B cell (primary cell): ENCODE measurements at regions of chr2 and their contacts with region 1.

Region 1: GRCh38 chr2:68157402-68158133 is at the start of gene PNO1:
- DNase-seq: peak; percentile 98
- ATAC-seq: peak; percentile 95
- H3K4me3 ChIP-seq: peak within 1 kb of the TSS; percentile 80 to 93 (median 89)
- H3K4me3 Mint-ChIP-seq: peak within 1 kb of the TSS; percentile 97
- H3K27ac ChIP-seq: peak within 1 kb of the TSS; percentile 96 to 98
- H3K27ac Mint-ChIP-seq: peak within 1 kb of the TSS; percentile 100
- H3K4me1 ChIP-seq: peaks cover 32 to 35% of the 10 kb centered on the region in 2 donors
- H3K4me1 Mint-ChIP-seq: peaks cover 48% of the 10 kb centered on the region
- H3K27me3 ChIP-seq: no peaks in the 10 kb centered on the region
- H3K27me3 Mint-ChIP-seq: no peaks in the 10 kb centered on the region
- CTCF ChIP-seq: no peak
- total RNA-seq, gene PNO1: 10.8 and 12.3 TPM in 2 replicates

Region 2: DNA sequence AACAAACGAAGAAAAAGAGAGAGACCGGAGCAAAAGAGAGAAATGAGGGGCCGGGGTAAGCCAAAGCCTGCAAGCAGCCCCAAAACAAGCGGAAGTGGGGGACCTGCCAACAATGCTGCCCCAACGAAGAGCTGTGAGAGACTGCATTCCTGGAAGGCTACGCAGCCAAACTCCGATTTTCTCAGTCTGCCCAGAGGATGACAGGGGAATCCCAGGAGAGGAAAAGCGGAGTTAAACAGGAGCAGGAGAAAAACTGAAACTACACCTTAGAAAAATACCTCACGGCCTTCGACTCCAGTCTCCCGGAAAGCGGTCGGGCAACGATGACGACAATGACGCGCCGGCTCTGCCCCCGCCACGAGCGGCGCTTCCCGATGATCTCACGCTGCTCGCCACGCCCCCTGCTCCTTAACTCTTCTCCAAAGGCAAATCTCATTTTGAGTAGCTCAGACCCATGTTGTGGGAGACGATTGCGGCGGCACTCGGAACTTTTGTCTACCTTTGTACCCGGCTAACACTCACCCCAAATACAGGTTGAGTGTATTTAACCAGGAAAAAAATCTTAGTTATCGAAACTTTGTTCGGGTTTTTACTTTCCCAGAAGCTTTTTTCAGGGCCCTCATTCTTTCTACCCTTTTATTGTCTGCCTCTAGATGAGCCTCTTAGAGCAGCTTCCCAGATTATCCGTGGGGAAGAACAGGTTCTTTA is 94.7 kb before region 1 on chr2 and contains the start of gene C1D:
- CTCF ChIA-PET with region 1: no interaction called
- POLR2A ChIA-PET with region 1: no interaction called
- intact Hi-C with region 1: loop called (anchors 1 kb)
- DNase-seq: peak; percentile 95
- ATAC-seq: peak; percentile 96
- H3K4me3 ChIP-seq: peak within 1 kb of the TSS; percentile 87 to 97 (median 96)
- H3K4me3 Mint-ChIP-seq: peak within 1 kb of the TSS; percentile 95
- H3K27ac ChIP-seq: peak within 1 kb of the TSS; percentile 88 to 96
- H3K27ac Mint-ChIP-seq: peak within 1 kb of the TSS; percentile 96
- H3K4me1 ChIP-seq: peaks cover 20 to 30% of the 10 kb centered on the region in 2 donors
- H3K4me1 Mint-ChIP-seq: peaks cover 40% of the 10 kb centered on the region
- H3K27me3 ChIP-seq: no peaks in the 10 kb centered on the region
- H3K27me3 Mint-ChIP-seq: peaks cover 6% of the 10 kb centered on the region
- CTCF ChIP-seq: no peak
- total RNA-seq, gene C1D: 20.1 and 24.8 TPM in 2 replicates

Region 3: DNA sequence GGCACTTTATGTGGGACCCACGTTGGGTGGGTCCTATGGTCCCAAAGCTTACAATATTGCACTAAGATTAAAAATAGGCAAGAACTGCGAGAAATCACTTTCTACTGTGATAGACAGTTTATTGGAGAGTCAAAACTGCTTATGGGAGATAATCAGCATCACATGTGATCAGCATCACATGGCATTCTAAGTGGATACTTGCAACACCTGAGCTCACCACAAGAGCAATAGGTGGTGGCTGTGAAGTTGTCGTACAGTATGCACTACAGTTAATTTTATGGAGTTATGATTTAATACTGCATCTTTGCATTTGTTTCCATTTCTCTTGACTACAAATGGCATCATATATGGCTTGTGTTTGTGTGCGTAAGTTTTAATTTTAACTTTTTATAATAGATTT is 11.7 kb after region 1 on chr2:
- CTCF ChIA-PET with region 1: interaction called, 13 read pairs
- POLR2A ChIA-PET with region 1: interaction called, 3 read pairs
- intact Hi-C with region 1: no loop called
- DNase-seq: no peak
- ATAC-seq: no peak
- H3K4me3 ChIP-seq: no peak overlapping the region
- H3K4me3 Mint-ChIP-seq: no peak overlapping the region
- H3K27ac ChIP-seq: no peak overlapping the region
- H3K27ac Mint-ChIP-seq: no peak overlapping the region
- H3K4me1 ChIP-seq: peaks cover 12 to 14% of the 10 kb centered on the region in 2 donors
- H3K4me1 Mint-ChIP-seq: peaks cover 20% of the 10 kb centered on the region
- H3K27me3 ChIP-seq: no peaks in the 10 kb centered on the region
- H3K27me3 Mint-ChIP-seq: no peaks in the 10 kb centered on the region
- CTCF ChIP-seq: no peak

Region 4: GRCh38 chr2:68203587-68203986 is 46.0 kb after region 1 on chr2:
- CTCF ChIA-PET with region 1: no interaction called
- POLR2A ChIA-PET with region 1: no interaction called
- intact Hi-C with region 1: loop called (anchors 5 kb)
- DNase-seq: peak; percentile 48
- ATAC-seq: peak; percentile 68
- H3K4me3 ChIP-seq: peak overlapping the region in 3 of 5 experiments; percentile 12 to 58 (median 32)
- H3K4me3 Mint-ChIP-seq: peak overlapping the region; percentile 87
- H3K27ac ChIP-seq: peak overlapping the region; percentile 48 to 78
- H3K27ac Mint-ChIP-seq: peak overlapping the region; percentile 74
- H3K4me1 ChIP-seq: peaks cover 8 to 40% of the 10 kb centered on the region in 2 donors
- H3K4me1 Mint-ChIP-seq: peaks cover 63% of the 10 kb centered on the region
- H3K27me3 ChIP-seq: no peaks in the 10 kb centered on the region
- H3K27me3 Mint-ChIP-seq: no peaks in the 10 kb centered on the region
- CTCF ChIP-seq: no peak

Region 5: DNA sequence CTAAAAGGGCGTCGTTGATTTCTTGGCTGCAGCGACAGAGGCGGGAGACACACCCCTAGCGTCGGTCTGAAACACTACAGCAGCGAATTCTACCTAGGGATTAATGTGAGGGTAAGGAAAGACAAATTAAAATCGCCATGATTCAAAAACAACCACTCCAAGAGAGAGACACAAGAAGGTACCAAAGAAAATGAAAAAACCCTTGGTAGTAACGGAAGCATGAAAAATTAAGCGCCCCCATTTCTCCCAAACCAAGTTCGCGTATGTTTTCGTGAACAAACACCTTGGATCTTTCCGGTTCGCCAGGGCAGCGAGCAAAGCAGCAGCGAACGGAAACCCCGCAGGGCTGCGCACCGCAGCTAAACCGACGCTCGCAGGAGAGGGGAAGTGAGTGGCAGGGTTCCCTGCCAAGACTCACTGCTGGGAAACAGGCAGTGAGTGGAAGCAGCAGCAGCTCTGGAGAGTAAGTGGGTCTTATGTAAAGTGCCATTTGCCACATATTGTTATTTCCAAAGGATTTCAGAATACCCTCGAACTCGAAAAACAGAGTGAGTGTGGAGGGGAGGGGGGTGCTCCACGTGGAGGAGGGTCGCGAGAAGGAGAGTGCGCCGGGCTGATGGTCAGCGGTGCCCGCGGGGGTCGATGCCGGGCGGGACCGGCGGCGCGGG is 93.8 kb after region 1 on chr2:
- CTCF ChIA-PET with region 1: interaction called, 9 read pairs
- POLR2A ChIA-PET with region 1: interaction called, 14 read pairs
- intact Hi-C with region 1: loop called (anchors 1 kb)
- DNase-seq: peak; percentile 92
- ATAC-seq: peak; percentile 60
- H3K4me3 ChIP-seq: peak overlapping the region; percentile 76 to 97 (median 96)
- H3K4me3 Mint-ChIP-seq: peak overlapping the region; percentile 90
- H3K27ac ChIP-seq: peak overlapping the region; percentile 86 to 92
- H3K27ac Mint-ChIP-seq: peak overlapping the region; percentile 93
- H3K4me1 ChIP-seq: peaks cover 39 to 55% of the 10 kb centered on the region in 2 donors
- H3K4me1 Mint-ChIP-seq: peaks cover 36% of the 10 kb centered on the region
- H3K27me3 ChIP-seq: no peaks in the 10 kb centered on the region
- H3K27me3 Mint-ChIP-seq: no peaks in the 10 kb centered on the region
- CTCF ChIP-seq: peak; percentile 77

Region 6: GRCh38 chr2:68387408-68388350 is 230.1 kb after region 1 on chr2:
- CTCF ChIA-PET with region 1: no interaction called
- POLR2A ChIA-PET with region 1: no interaction called
- intact Hi-C with region 1: no loop called
- DNase-seq: peak; percentile 90
- ATAC-seq: peak; percentile 69
- H3K4me3 ChIP-seq: peak overlapping the region in 2 of 5 experiments; percentile 10 to 15
- H3K4me3 Mint-ChIP-seq: peak overlapping the region; percentile 75
- H3K27ac ChIP-seq: peak overlapping the region; percentile 95 to 98
- H3K27ac Mint-ChIP-seq: peak overlapping the region; percentile 89
- H3K4me1 ChIP-seq: peaks cover 96 to 99% of the 10 kb centered on the region in 2 donors
- H3K4me1 Mint-ChIP-seq: peaks cover 91% of the 10 kb centered on the region
- H3K27me3 ChIP-seq: no peaks in the 10 kb centered on the region
- H3K27me3 Mint-ChIP-seq: no peaks in the 10 kb centered on the region
- CTCF ChIP-seq: no peak